ENCODE measurements at regions of chr5 and their contacts with region 1.

Region 1: DNA sequence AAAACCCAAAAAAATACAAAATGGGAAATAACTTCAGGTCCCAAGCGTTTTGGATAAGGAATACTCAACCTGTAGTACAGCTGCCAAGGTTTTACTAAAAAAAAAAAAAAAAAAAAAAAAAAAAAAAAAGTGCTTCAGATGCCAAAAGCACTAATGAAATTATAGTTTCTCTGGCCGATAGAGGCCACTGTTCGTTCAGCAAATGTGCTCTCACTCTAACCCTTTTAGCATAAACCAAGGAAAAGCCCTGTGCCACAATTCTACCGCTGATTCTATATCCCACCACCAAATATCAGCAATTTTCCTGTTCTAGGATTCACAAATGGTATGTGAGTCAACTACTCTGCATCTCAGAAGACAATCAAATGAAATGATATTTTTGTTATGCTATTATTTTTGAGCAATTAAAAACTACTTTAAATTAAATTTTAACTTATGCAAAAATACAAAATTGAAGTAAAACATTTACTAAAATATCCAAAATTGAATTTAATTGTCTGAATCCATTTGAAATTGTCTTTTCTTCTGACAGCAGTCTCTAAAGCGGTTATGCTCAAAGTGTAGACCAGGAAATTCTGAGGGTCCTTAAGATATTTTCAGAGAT is 79.8 kb downstream of the RICTOR start:
- DNase-seq: peak in 1 of 3 donors; percentile 49
- ATAC-seq: peak; percentile 86 to 95 (median 89)
- H3K4me3 ChIP-seq: no peak overlapping the region
- H3K27ac ChIP-seq: no peak overlapping the region
- H3K4me1 ChIP-seq: no peaks in the 10 kb centered on the region
- H3K27me3 ChIP-seq: no peaks in the 10 kb centered on the region
- CTCF ChIP-seq: peak; percentile 51 to 57 (median 55)
- POLR2A ChIP-seq: no peak

Region 2: DNA sequence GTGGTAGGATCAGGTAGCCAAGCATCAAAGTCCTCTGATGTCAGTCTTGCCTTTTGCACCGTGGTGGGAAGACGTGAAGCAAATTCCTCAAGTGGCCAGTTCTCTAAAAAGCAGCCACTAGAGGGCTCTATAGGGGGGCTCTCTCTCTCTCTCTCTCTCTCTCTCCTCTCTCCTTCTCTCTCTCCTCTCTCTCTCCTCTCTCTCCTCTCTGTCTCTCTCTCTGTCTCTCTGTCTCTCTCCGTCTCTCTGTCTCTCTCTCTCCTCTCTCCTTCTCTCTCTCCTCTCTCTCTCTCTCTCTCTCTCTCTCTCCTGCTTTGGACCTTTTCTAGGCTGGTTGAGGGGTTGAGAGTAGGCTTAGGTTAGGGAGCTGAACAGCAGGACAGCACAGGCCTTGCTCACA is 162.5 kb before region 1 on chr5:
- intact Hi-C with region 1: no loop called
- DNase-seq: no peak
- ATAC-seq: peak; percentile 16 to 64 (median 50)
- H3K4me3 ChIP-seq: no peak overlapping the region
- H3K27ac ChIP-seq: no peak overlapping the region
- H3K4me1 ChIP-seq: no peaks in the 10 kb centered on the region
- H3K27me3 ChIP-seq: no peaks in the 10 kb centered on the region
- CTCF ChIP-seq: peak in 3 of 4 donors; percentile 15 to 36 (median 31)
- POLR2A ChIP-seq: no peak

Region 3: DNA sequence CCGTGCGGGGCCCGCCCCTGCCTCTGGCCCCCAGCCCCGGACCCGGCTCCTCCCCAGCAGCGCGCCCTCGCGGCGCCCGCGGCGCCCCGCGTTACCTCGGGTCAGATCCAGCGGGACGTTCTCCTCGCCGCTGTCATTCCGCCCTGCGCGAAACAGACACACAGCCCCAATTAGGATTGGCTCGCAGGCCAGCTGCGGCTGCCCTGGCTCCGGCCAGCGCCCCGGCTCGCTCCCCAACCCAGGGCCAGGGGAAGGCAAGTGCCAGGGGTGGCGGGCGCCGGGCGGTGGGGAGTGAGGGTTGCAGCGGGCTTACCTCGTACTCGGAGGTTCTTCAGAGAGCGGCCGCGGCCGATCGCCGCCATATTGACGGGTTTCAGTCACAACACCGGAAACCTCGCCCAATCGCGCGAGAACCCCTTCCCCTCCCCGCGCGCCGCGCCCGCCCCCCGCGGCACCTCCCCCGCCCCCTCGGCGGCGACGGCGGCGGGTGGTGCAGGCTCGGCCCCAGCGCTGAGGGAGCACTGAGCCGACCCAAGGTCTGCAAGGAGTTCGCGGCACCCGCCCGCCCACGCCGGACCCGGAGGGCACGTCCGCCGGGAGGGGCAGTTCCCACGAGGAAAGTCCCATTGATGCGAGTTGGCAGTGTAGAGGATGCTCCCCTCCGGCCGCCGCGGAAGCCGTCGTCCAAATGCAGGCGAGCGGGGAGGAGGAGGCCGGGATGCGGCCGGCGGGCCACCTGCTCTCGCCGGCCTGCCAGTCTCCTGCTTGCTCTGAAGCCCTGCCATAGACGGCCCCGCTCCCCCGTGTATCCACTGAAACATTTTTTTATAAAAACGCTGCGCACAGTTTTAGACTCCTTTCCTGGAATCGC is 79.8 kb after region 1 on chr5 and contains the start of gene RICTOR:
- intact Hi-C with region 1: loop called in 1 of 2 experiments (anchors 10 kb)
- DNase-seq: peak; percentile 91 to 94 (median 92)
- ATAC-seq: peak; percentile 83 to 92 (median 89)
- H3K4me3 ChIP-seq: peak within 1 kb of the TSS; percentile 72 to 83 (median 75)
- H3K27ac ChIP-seq: peak within 1 kb of the TSS; percentile 97 to 99 (median 98)
- H3K4me1 ChIP-seq: peaks cover 0 to 22% (median 0%) of the 10 kb centered on the region in 4 donors
- H3K27me3 ChIP-seq: no peaks in the 10 kb centered on the region
- CTCF ChIP-seq: no peak
- POLR2A ChIP-seq: peak; percentile 56
- total RNA-seq, gene RICTOR: 9.8 to 19.2 (median 14.6) TPM

Region 4: GRCh38 chr5:39209924-39210323 is 215.5 kb after region 1 on chr5:
- intact Hi-C with region 1: no loop called
- DNase-seq: no peak
- ATAC-seq: peak; percentile 35 to 60 (median 58)
- H3K4me3 ChIP-seq: no peak overlapping the region
- H3K27ac ChIP-seq: no peak overlapping the region
- H3K4me1 ChIP-seq: no peaks in the 10 kb centered on the region
- H3K27me3 ChIP-seq: no peaks in the 10 kb centered on the region
- CTCF ChIP-seq: no peak
- POLR2A ChIP-seq: no peak

Measured in right lobe of liver (tissue), 6 donors.